ENCODE measurements at regions of chr9 and their contacts with region 1.

Region 1: GRCh38 chr9:14400658-14400995 is 86.7 kb upstream of the NFIB start:
- DNase-seq: peak; percentile 6
- ATAC-seq: peak; percentile 53
- H3K4me3 ChIP-seq: no peak overlapping the region
- H3K27ac ChIP-seq: no peak overlapping the region
- H3K4me1 ChIP-seq: no peaks in the 10 kb centered on the region
- H3K27me3 ChIP-seq: peaks cover 4% of the 10 kb centered on the region; the same call in 1 of the 2 replicates
- CTCF ChIP-seq: peak; percentile 7 to 25 (median 16); a peak in 2 of 6 replicates
- POLR2A ChIP-seq: no peak
- RAD21 ChIP-seq: peak; percentile 47

Region 2: GRCh38 chr9:13427587-13427986 is 973.0 kb before region 1 on chr9:
- CTCF ChIA-PET with region 1: interaction called, 14 read pairs
- POLR2A ChIA-PET with region 1: no interaction called
- RAD21 ChIA-PET with region 1: no interaction called
- intact Hi-C with region 1: no loop called
- DNase-seq: no peak
- ATAC-seq: no peak
- H3K4me3 ChIP-seq: no peak overlapping the region
- H3K27ac ChIP-seq: no peak overlapping the region
- H3K4me1 ChIP-seq: no peaks in the 10 kb centered on the region
- H3K27me3 ChIP-seq: no peaks in the 10 kb centered on the region
- CTCF ChIP-seq: peak; percentile 33 to 69 (median 47); a peak in 5 of 6 replicates
- POLR2A ChIP-seq: no peak
- RAD21 ChIP-seq: peak; percentile 62

Region 3: GRCh38 chr9:14270358-14271092 is 130.1 kb before region 1 on chr9:
- CTCF ChIA-PET with region 1: no interaction called
- POLR2A ChIA-PET with region 1: no interaction called
- RAD21 ChIA-PET with region 1: no interaction called
- intact Hi-C with region 1: no loop called
- DNase-seq: no peak
- ATAC-seq: no peak
- H3K4me3 ChIP-seq: no peak overlapping the region
- H3K27ac ChIP-seq: no peak overlapping the region
- H3K4me1 ChIP-seq: no peaks in the 10 kb centered on the region
- H3K27me3 ChIP-seq: 0 out of 2 replicates have a peak, but pooled peaks cover 3% of the 10 kb centered on the region
- CTCF ChIP-seq: no peak
- POLR2A ChIP-seq: no peak
- RAD21 ChIP-seq: no peak

Region 4: GRCh38 chr9:14597171-14597799 is 196.7 kb after region 1 on chr9:
- CTCF ChIA-PET with region 1: no interaction called
- POLR2A ChIA-PET with region 1: no interaction called
- RAD21 ChIA-PET with region 1: no interaction called
- intact Hi-C with region 1: no loop called
- DNase-seq: no peak
- ATAC-seq: no peak
- H3K4me3 ChIP-seq: no peak overlapping the region
- H3K27ac ChIP-seq: no peak overlapping the region
- H3K4me1 ChIP-seq: no peaks in the 10 kb centered on the region
- H3K27me3 ChIP-seq: no peaks in the 10 kb centered on the region
- CTCF ChIP-seq: no peak
- POLR2A ChIP-seq: no peak
- RAD21 ChIP-seq: no peak